ENCODE measurements at regions of chr1 and their contacts with region 1.

Region 1: GRCh38 chr1:170074250-170075157 is at the start of gene KIFAP3:
- DNase-seq: peak; percentile 97
- H3K4me3 ChIP-seq: peak within 1 kb of the TSS; percentile 54
- H3K27ac ChIP-seq: peak within 1 kb of the TSS; percentile 72
- H3K4me1 ChIP-seq: no peaks in the 10 kb centered on the region
- H3K27me3 ChIP-seq: no peaks in the 10 kb centered on the region
- CTCF ChIP-seq: peak; percentile 60
- total RNA-seq, gene KIFAP3: 18.3 to 27.6 TPM

Region 2: DNA sequence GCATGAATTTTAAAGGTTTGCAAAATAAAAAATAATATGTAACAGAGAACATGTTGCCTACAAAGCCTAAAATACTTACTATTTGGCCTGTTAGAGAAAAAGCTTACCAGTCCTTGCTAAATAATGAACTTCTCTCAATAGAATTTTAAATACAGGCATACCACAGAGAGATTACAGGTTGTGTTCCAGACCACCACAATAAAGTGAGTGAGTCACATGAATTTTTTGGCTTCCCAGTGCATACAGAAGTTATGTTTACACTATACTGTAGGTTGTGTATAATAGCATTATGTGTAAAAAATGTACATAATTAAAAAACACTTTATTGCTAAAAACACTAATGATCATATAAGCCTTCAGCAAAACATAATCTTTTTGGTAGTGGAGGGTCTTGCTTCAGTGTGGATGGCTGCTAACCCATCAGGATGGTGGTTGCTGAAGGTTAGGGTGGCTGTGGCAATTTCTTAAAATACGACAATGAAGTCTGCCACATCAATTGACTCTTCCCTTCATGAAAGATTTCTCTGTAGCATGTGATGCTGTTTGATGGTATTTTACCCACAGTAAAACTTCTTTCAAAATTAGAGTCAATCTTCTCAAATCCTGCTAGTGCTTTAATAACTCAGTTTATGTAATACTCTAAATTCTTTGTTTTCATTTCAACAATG is 229.4 kb before region 1 on chr1:
- intact Hi-C with region 1: no loop called
- DNase-seq: no peak
- H3K4me3 ChIP-seq: no peak overlapping the region
- H3K27ac ChIP-seq: no peak overlapping the region
- H3K4me1 ChIP-seq: no peaks in the 10 kb centered on the region
- H3K27me3 ChIP-seq: no peaks in the 10 kb centered on the region
- CTCF ChIP-seq: no peak

Region 3: GRCh38 chr1:169893494-169894362 is 180.8 kb before region 1 on chr1 and contains the start of gene SCYL3:
- intact Hi-C with region 1: no loop called
- DNase-seq: peak; percentile 95
- H3K4me3 ChIP-seq: peak within 1 kb of the TSS; percentile 91
- H3K27ac ChIP-seq: peak within 1 kb of the TSS; percentile 94
- H3K4me1 ChIP-seq: no peaks in the 10 kb centered on the region
- H3K27me3 ChIP-seq: no peaks in the 10 kb centered on the region
- CTCF ChIP-seq: no peak
- total RNA-seq, gene SCYL3: 11.6 to 15.8 TPM

Region 4: DNA sequence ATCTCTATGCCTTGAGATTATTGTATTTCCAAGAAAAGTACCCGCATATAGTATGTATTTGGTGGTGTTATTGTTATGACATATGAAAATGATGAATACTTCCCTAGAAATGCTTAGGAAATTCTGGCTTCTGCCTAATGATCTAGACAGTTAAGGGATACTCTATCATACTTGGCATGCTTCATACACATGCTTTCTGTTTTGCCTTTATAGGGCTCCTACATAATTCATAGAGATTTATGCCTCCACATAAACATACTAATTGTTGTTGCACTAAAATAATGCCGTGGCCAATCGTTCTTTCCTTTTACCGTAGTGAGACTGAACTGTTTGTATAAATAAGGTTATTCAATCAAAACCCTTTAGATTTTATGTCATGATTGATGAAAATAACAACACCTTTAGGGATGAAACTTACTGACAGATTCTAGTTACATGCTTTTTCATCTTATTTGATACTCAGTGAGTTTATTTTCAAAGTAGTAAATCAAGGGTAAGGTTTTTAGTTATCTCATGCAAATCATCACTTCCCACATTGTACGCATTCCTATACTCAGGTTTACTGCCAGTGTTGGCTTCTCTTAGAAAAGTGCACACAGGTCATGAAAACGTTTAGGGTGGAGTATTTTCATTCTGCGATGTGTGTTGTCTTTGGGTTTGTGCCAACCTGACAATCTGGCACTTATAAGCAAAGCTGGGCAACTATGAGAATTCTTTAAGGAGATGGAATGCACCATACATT is 140.3 kb before region 1 on chr1:
- intact Hi-C with region 1: loop called (anchors 10 kb)
- DNase-seq: peak; percentile 75
- H3K4me3 ChIP-seq: no peak overlapping the region
- H3K27ac ChIP-seq: no peak overlapping the region
- H3K4me1 ChIP-seq: no peaks in the 10 kb centered on the region
- H3K27me3 ChIP-seq: no peaks in the 10 kb centered on the region
- CTCF ChIP-seq: no peak